Right cardiac atrium (tissue), 5 donors: ENCODE measurements at regions of chr18 and their contacts with region 1.

Region 1: GRCh38 chr18:6132751-6133368 is 237.5 kb upstream of the TMEM200C start:
- DNase-seq: peak; percentile 38 to 48 (median 46)
- ATAC-seq: peak; percentile 96 to 97
- H3K4me3 ChIP-seq: no peak overlapping the region
- H3K27ac ChIP-seq: peak overlapping the region; percentile 14
- H3K4me1 ChIP-seq: no peaks in the 10 kb centered on the region
- H3K27me3 ChIP-seq: no peaks in the 10 kb centered on the region

Region 2: DNA sequence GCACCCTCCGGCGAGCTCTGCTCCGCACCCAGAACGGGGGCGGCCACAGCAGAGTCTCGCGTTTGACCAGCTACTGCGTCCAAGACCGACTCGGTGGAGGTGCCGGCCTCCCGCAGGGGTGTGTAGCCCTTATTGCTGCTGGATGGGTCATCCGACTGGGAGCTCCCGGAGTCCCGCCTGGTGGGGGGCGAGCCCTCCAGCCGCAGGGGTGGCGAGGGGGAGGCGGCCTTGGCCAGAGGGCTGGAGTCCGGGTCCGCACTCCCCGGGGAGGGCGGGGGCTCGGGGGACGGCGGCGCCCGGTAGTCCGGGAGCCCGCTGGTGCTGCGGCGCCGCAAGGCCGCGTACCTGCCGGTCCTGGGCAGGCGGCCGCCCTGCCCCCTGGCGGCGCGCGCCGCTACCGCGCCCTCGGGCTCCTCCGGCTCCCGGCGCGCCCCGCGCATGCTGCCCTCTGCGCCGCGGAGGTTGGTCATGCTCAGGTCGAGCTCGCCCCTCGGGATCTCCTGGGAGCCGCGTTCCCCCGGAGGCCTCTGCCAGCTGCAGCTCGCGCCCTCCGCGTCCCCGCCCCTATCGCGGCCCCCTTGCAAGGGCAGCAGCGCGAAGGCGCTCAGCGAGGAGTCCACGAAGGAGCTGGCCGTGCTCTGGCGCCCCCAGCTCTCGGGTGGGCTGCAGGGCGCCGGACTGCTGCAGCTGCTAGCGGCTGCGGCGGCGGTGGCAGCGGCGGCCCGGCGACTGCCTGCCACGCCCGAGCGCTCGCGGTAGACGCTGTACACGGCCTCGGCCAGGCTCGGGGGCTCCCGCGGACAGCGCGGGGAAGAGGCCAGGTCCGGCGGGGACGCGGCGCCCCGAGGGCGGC is 242.3 kb before region 1 on chr18:
- intact Hi-C with region 1: loop called in 1 of 4 experiments (anchors 10 kb)
- DNase-seq: peak; percentile 49 to 77 (median 67)
- ATAC-seq: peak; percentile 86 to 87
- H3K4me3 ChIP-seq: peak overlapping the region; percentile 49
- H3K27ac ChIP-seq: no peak overlapping the region
- H3K4me1 ChIP-seq: no peaks in the 10 kb centered on the region
- H3K27me3 ChIP-seq: no peaks in the 10 kb centered on the region

Region 3: GRCh38 chr18:6056146-6056932 is 76.5 kb before region 1 on chr18:
- intact Hi-C with region 1: no loop called
- DNase-seq: no peak
- ATAC-seq: no peak
- H3K4me3 ChIP-seq: no peak overlapping the region
- H3K27ac ChIP-seq: peak overlapping the region; percentile 67
- H3K4me1 ChIP-seq: peaks cover 7% of the 10 kb centered on the region
- H3K27me3 ChIP-seq: no peaks in the 10 kb centered on the region

Region 4: DNA sequence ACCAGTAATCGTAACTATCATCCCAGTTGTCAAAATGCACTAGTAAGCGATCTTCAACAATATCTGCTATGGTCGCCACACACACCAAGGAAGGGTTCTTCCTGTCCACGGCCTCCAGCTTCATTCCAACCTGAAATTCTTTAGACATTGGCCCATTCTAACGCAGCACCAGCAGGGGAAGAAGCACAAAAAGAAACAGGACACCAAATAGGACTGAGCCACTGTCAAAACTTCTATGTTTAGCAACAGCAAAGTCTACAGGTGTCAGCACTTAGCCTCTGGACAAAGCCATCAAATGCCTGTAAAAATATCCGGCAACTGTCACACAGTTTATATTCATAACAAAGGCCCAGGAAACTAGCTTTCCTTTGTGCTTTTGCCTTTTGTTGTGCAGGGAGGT is 106.9 kb after region 1 on chr18:
- intact Hi-C with region 1: no loop called
- DNase-seq: no peak
- ATAC-seq: peak in 1 of 2 donors; percentile 52
- H3K4me3 ChIP-seq: no peak overlapping the region
- H3K27ac ChIP-seq: no peak overlapping the region
- H3K4me1 ChIP-seq: no peaks in the 10 kb centered on the region
- H3K27me3 ChIP-seq: no peaks in the 10 kb centered on the region